Mammary epithelial cell (primary cell): ENCODE measurements at regions of chr13 and their contacts with region 1.

Region 1: GRCh38 chr13:29782798-29783197 is 67.6 kb downstream of the UBL3 start:
- DNase-seq: no peak
- H3K4me3 ChIP-seq: no peak overlapping the region
- H3K27ac ChIP-seq: no peak overlapping the region
- H3K4me1 ChIP-seq: no peaks in the 10 kb centered on the region
- H3K27me3 ChIP-seq: no peaks in the 10 kb centered on the region
- CTCF ChIP-seq: no peak

Region 2: GRCh38 chr13:30033681-30034457 is 251.1 kb after region 1 on chr13:
- CTCF ChIA-PET with region 1: interaction called, 18 read pairs
- dilution Hi-C with region 1: no loop called
- in situ Hi-C with region 1: no loop called
- intact Hi-C with region 1: no loop called
- DNase-seq: peak; percentile 66
- H3K4me3 ChIP-seq: no peak overlapping the region
- H3K27ac ChIP-seq: no peak overlapping the region
- H3K4me1 ChIP-seq: no peaks in the 10 kb centered on the region
- H3K27me3 ChIP-seq: no peaks in the 10 kb centered on the region
- CTCF ChIP-seq: no peak

Region 3: DNA sequence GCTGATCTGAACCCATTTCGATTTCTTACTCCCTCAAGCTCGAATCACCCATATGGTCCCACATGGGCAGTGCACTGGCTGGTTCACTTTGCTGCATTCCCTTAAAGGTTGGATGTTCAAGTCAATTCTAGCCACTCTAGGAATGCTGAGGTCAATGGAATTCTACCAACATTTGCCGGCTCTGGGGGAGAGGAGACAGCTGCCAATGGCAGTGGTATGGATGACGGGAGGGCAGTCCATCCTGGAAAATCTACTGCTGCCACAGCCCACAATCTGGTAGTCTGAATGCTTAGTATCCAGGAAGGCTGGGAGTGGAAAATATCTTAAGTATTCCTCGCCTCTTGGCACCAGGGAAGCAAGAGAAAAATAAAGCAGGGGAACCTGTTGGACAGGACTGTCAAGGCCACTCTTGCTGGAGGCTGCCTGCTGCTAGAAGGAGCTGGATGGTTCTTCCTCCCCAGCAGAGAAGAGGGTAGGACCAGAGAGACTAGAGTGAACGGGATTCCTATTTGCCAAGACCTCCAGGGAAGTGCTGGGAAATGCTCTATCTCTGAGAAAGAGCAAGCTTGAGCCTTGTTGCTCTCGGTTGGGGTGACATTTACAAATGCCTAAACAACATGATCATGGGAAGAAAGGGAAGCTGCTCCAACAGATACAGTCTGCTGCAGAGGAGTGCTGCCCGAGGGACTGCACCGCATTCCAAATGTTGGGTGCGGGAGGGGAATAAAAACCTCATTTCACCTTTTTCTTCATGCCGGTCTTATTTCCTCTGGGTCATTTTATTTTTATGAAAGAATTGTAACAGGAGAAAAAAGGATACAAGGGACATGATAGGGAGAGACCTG is 703.7 kb after region 1 on chr13:
- CTCF ChIA-PET with region 1: no interaction called
- dilution Hi-C with region 1: no loop called
- in situ Hi-C with region 1: no loop called
- intact Hi-C with region 1: no loop called
- DNase-seq: peak; percentile 45
- H3K4me3 ChIP-seq: no peak overlapping the region
- H3K27ac ChIP-seq: no peak overlapping the region
- H3K4me1 ChIP-seq: peaks cover 10% of the 10 kb centered on the region
- H3K27me3 ChIP-seq: no peaks in the 10 kb centered on the region
- CTCF ChIP-seq: no peak